HepG2 (cell line): ENCODE measurements at regions of chr3 and their contacts with region 1.

Region 1: GRCh38 chr3:133040696-133041523 is 2.7 kb downstream of the TMEM108 start:
- DNase-seq: peak; percentile 58
- ATAC-seq: peak; percentile 95
- H3K4me3 ChIP-seq: no peak overlapping the region
- H3K27ac ChIP-seq: no peak overlapping the region
- H3K4me1 ChIP-seq: no peaks in the 10 kb centered on the region
- H3K27me3 ChIP-seq: peaks cover 0 to 25% of the 10 kb centered on the region in 2 experiments; a peak in 3 of 5 replicates
- CTCF ChIP-seq: peak; percentile 84
- EP300 ChIP-seq: no peak
- POLR2A ChIP-seq: no peak
- RAD21 ChIP-seq: peak; percentile 68; the same call in 1 of the 2 replicates

Region 2: DNA sequence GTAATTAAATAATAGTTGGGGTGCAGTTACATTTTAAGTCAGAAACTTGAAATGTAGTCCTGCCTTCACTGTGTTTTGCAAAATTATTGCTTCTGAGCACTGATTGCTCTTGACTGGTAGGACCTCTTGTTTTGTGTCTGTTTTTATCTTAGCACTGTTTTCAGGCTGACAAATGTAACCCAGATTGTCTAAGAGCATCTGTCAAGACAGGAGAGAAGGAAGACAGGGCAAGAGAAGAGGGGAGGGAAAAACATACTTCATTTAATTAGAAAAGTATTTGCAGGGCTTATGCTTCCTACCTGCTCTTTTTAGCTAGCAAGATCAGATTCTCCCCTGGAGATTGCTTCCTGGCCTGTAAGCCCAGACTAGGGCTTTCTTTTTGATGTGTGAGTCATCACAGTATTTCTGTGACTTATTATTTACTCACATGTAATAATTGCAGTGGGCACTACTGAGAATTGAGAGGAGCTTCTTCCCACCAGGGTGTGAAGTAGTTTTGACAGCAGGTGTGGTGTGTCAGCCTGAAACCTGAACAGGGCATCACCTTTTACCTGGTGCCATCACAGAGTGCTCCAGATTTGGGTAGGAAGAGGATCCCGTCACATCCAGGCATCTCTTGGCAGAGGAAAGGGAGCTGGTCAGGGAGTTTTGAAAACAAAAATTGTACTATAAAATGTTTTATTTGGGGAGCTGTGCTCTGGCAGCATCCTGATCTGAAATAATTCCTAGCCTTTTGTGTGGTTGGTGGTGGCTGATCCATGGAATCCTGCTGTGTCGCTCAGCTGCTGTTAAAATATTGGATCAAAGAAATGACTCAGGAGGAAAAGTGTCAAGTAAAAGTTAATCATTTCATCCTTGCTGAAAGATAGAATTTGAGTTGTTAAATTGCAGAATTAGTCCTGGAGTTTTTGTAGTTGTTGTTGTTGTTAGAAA is 95.5 kb after region 1 on chr3:
- CTCF ChIA-PET with region 1: no interaction called
- POLR2A ChIA-PET with region 1: no interaction called
- in situ Hi-C with region 1: no loop called
- intact Hi-C with region 1: no loop called
- DNase-seq: no peak
- ATAC-seq: no peak
- H3K4me3 ChIP-seq: no peak overlapping the region
- H3K27ac ChIP-seq: no peak overlapping the region
- H3K4me1 ChIP-seq: no peaks in the 10 kb centered on the region
- H3K27me3 ChIP-seq: no peaks in the 10 kb centered on the region; a peak in 1 of 5 replicates
- CTCF ChIP-seq: no peak
- EP300 ChIP-seq: no peak
- POLR2A ChIP-seq: no peak
- RAD21 ChIP-seq: no peak

Region 3: GRCh38 chr3:133377396-133377795 is 336.5 kb after region 1 on chr3:
- CTCF ChIA-PET with region 1: interaction called, 5 read pairs
- POLR2A ChIA-PET with region 1: no interaction called
- in situ Hi-C with region 1: loop called (anchors 5 kb)
- intact Hi-C with region 1: loop called (anchors 1 kb)
- DNase-seq: peak; percentile 28
- ATAC-seq: peak; percentile 73
- H3K4me3 ChIP-seq: no peak overlapping the region
- H3K27ac ChIP-seq: no peak overlapping the region
- H3K4me1 ChIP-seq: peaks cover 13% of the 10 kb centered on the region
- H3K27me3 ChIP-seq: no peaks in the 10 kb centered on the region; a peak in 2 of 5 replicates
- CTCF ChIP-seq: peak; percentile 59
- EP300 ChIP-seq: no peak
- POLR2A ChIP-seq: no peak
- RAD21 ChIP-seq: 0 out of 2 replicates have a peak, but pooled peaks have one; percentile 23